Heart right ventricle (tissue), 16 donors: ENCODE measurements at regions of chr11 and their contacts with region 1.

Region 1: DNA sequence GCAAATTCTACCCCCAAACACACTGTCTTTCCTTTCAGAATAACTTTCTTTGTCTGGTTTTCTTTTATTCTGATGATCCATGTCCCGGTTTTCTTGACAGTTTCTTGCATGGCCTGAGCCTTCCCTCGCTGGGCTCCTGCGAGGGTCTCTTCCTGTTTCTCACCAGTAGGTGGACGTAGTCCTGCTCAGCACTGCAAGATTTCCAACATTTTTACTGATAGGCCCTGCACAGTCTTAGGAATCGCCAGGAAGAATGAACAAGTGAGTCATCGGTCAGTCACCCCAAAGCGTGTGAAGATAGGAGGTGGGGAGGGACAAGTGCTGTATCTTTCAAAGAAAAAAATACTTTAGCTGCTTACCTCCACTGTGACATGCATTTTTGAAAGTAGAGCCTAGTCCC is 16.9 kb upstream of the KIRREL3 start:
- DNase-seq: no peak
- ATAC-seq: no peak
- H3K4me3 ChIP-seq: no peak overlapping the region
- H3K27ac ChIP-seq: no peak overlapping the region
- H3K4me1 ChIP-seq: no peaks in the 10 kb centered on the region
- H3K27me3 ChIP-seq: peaks cover 0 to 66% (median 21%) of the 10 kb centered on the region in 7 donors
- CTCF ChIP-seq: no peak

Region 2: DNA sequence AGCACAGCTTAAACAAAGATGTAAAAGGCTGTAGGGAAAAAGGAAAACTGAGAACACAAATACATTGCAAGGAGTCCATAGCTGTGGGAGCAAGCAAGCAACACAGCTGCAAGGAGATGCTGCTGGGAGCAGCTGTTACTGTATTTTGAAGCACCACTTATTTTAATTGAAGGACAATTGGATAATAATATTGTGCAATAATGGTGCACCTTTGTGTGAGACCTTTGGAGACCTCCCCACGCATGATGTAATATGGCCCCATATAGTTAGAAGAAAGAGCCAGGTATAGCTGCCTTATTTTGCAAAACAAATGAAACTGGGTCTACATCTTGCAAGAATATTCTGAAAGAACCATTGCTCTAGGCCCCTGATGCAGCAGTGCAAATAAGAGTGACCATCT is 174.2 kb after region 1 on chr11:
- intact Hi-C with region 1: no loop called
- DNase-seq: no peak
- ATAC-seq: no peak
- H3K4me3 ChIP-seq: no peak overlapping the region
- H3K27ac ChIP-seq: no peak overlapping the region
- H3K4me1 ChIP-seq: peaks cover 0 to 7% (median 0%) of the 10 kb centered on the region in 9 donors
- H3K27me3 ChIP-seq: peaks cover 0 to 15% (median 0%) of the 10 kb centered on the region in 7 donors
- CTCF ChIP-seq: no peak

Region 3: GRCh38 chr11:127288926-127289325 is 271.4 kb after region 1 on chr11:
- intact Hi-C with region 1: no loop called
- DNase-seq: no peak
- ATAC-seq: no peak
- H3K4me3 ChIP-seq: no peak overlapping the region
- H3K27ac ChIP-seq: no peak overlapping the region
- H3K4me1 ChIP-seq: no peaks in the 10 kb centered on the region
- H3K27me3 ChIP-seq: no peaks in the 10 kb centered on the region
- CTCF ChIP-seq: no peak

Region 4: DNA sequence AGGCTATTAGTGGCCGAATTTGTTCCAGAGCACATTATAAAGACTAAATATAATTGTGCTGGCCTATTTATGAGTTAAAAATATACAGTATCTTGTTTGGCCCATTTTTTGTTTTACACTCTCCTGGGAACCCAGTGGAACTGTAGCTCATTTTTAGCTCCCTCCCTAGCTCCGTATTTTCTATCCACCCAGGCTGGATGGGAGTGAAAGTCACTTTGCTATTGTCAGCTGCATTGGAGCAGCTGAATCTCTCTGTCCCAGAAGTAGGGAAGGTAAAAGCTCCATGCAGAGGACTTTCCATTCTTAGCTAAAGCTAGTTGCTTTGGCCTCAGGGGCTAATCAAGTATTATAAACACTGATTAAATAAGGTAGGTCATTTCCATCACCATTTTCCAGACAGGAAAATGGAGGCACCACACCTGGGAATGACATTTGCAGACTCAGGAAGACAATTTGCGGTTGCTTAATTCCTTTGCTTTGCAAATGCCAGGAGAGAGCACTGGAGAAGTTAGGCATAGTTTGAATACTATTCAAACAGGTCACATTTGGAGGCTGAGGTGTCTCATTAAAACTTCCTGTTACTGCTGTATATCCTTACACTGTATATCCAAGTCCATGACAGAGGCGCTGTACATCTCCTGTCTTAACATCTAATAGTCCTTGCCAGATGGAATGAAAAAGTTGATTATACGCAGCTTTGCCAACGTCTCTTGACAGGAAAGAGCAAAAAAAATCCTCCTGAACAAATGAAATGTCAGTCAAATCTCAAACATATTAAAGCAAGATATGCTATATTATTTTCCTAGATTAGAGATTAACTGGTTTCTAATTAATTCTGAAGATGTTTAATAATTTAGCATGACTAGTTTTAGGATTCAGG is 321.1 kb after region 1 on chr11:
- intact Hi-C with region 1: loop called in 1 of 10 experiments (anchors 10 kb)
- DNase-seq: no peak
- ATAC-seq: no peak
- H3K4me3 ChIP-seq: no peak overlapping the region
- H3K27ac ChIP-seq: no peak overlapping the region
- H3K4me1 ChIP-seq: no peaks in the 10 kb centered on the region
- H3K27me3 ChIP-seq: no peaks in the 10 kb centered on the region
- CTCF ChIP-seq: no peak